Naive thymus-derived CD4-positive, alpha-beta T cell (primary cell): ENCODE measurements at regions of chr5 and their contacts with region 1.

Region 1: GRCh38 chr5:138464008-138464387 is 1.3 kb upstream of the EGR1 start:
- DNase-seq: peak; percentile 90 to 97 (median 94)
- ATAC-seq: peak; percentile 71
- H3K4me3 ChIP-seq: peak overlapping the region; percentile 95
- H3K4me3 Mint-ChIP-seq: peak overlapping the region; percentile 78 to 93 (median 89)
- H3K27ac ChIP-seq: peak overlapping the region; percentile 91
- H3K27ac Mint-ChIP-seq: peak overlapping the region; percentile 76 to 97 (median 91)
- H3K4me1 ChIP-seq: peaks cover 31 to 43% of the 10 kb centered on the region in 2 donors
- H3K4me1 Mint-ChIP-seq: peaks cover 36 to 54% (median 50%) of the 10 kb centered on the region in 7 donors
- H3K27me3 ChIP-seq: no peaks in the 10 kb centered on the region
- H3K27me3 Mint-ChIP-seq: peaks cover 0 to 20% (median 0%) of the 10 kb centered on the region in 5 donors

Region 2: DNA sequence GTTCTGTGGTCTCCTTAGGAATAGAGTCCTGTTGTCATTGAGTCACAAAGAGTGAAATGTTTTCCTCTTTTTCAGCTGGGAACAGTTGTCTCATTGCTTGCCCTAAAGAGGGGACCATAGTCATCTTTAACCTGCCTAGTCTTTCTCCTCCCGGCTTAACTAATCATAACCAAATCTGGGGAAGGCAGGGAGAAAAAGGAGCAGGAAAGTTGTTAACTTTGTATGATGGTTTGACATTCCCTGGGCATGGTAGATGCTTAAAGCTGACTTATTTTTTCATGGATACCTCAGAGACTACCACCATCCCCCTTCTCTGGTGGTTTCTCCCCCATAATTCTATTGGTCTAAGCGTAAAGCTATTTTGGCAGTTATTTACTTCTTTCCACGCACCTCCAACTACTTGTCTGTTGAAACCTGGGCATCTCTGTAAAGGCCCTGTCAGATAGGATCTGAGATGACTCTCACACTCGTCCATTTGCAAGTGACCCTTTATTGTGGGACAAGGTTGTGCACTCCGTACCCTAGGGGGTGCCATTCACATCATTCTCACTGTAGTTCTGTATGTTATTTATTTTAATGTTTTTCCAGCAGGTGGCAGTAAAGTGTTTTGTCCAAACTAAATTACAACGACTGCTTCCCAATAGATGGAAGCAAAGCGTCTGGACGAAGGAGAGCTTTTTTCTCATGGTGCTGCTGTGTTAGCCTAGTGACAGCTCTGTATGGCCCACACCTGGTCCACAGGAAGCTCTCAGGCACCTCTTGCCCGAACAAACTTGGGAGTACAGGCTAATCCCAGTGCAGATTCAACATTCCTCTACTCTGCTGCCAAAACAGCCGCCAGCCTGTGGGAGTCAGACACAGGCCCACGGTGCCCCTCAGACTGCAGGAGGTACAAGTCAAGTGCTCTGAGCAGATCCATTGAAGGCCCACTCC is 428.1 kb before region 1 on chr5:
- CTCF ChIA-PET with region 1: no interaction called
- POLR2A ChIA-PET with region 1: interaction called, 3 read pairs
- intact Hi-C with region 1: loop called in 1 of 2 experiments (anchors 10 kb)
- DNase-seq: peak; percentile 11 to 80 (median 72)
- ATAC-seq: peak; percentile 76
- H3K4me3 ChIP-seq: no peak overlapping the region
- H3K4me3 Mint-ChIP-seq: peak overlapping the region in 9 of 10 donors; percentile 0 to 78 (median 25)
- H3K27ac ChIP-seq: no peak overlapping the region
- H3K27ac Mint-ChIP-seq: peak overlapping the region in 8 of 9 donors; percentile 4 to 89 (median 37)
- H3K4me1 ChIP-seq: peaks cover 4 to 24% of the 10 kb centered on the region in 2 donors
- H3K4me1 Mint-ChIP-seq: peaks cover 15 to 30% (median 24%) of the 10 kb centered on the region in 7 donors
- H3K27me3 ChIP-seq: no peaks in the 10 kb centered on the region
- H3K27me3 Mint-ChIP-seq: no peaks in the 10 kb centered on the region

Region 3: GRCh38 chr5:138337685-138338410 is 126.2 kb before region 1 on chr5 and contains the start of gene FAM53C:
- CTCF ChIA-PET with region 1: no interaction called
- POLR2A ChIA-PET with region 1: interaction called, 4 read pairs
- intact Hi-C with region 1: loop called (anchors 1 kb)
- DNase-seq: peak; percentile 87 to 98 (median 93)
- ATAC-seq: peak; percentile 91
- H3K4me3 ChIP-seq: peak within 1 kb of the TSS; percentile 86
- H3K4me3 Mint-ChIP-seq: peak within 1 kb of the TSS; percentile 77 to 98 (median 94)
- H3K27ac ChIP-seq: peak within 1 kb of the TSS; percentile 95
- H3K27ac Mint-ChIP-seq: peak within 1 kb of the TSS; percentile 96 to 100 (median 99)
- H3K4me1 ChIP-seq: peaks cover 17 to 25% of the 10 kb centered on the region in 2 donors
- H3K4me1 Mint-ChIP-seq: peaks cover 16 to 42% (median 39%) of the 10 kb centered on the region in 7 donors
- H3K27me3 ChIP-seq: no peaks in the 10 kb centered on the region
- H3K27me3 Mint-ChIP-seq: no peaks in the 10 kb centered on the region
- total RNA-seq, gene FAM53C: 25.0 to 71.8 (median 27.7) TPM

Region 4: GRCh38 chr5:138449501-138450239 is 14.3 kb before region 1 on chr5:
- CTCF ChIA-PET with region 1: interaction called, 14 read pairs
- POLR2A ChIA-PET with region 1: interaction called, 8 read pairs
- intact Hi-C with region 1: loop called (anchors 1 kb)
- DNase-seq: peak; percentile 24 to 89 (median 60)
- ATAC-seq: peak; percentile 91
- H3K4me3 ChIP-seq: no peak overlapping the region
- H3K4me3 Mint-ChIP-seq: peak overlapping the region in 4 of 10 donors; percentile 33 to 54 (median 46)
- H3K27ac ChIP-seq: no peak overlapping the region
- H3K27ac Mint-ChIP-seq: no peak overlapping the region
- H3K4me1 ChIP-seq: peaks cover 7% of the 10 kb centered on the region in 2 donors
- H3K4me1 Mint-ChIP-seq: peaks cover 0 to 9% (median 6%) of the 10 kb centered on the region in 7 donors
- H3K27me3 ChIP-seq: no peaks in the 10 kb centered on the region
- H3K27me3 Mint-ChIP-seq: peaks cover 0 to 3% (median 0%) of the 10 kb centered on the region in 5 donors

Region 5: DNA sequence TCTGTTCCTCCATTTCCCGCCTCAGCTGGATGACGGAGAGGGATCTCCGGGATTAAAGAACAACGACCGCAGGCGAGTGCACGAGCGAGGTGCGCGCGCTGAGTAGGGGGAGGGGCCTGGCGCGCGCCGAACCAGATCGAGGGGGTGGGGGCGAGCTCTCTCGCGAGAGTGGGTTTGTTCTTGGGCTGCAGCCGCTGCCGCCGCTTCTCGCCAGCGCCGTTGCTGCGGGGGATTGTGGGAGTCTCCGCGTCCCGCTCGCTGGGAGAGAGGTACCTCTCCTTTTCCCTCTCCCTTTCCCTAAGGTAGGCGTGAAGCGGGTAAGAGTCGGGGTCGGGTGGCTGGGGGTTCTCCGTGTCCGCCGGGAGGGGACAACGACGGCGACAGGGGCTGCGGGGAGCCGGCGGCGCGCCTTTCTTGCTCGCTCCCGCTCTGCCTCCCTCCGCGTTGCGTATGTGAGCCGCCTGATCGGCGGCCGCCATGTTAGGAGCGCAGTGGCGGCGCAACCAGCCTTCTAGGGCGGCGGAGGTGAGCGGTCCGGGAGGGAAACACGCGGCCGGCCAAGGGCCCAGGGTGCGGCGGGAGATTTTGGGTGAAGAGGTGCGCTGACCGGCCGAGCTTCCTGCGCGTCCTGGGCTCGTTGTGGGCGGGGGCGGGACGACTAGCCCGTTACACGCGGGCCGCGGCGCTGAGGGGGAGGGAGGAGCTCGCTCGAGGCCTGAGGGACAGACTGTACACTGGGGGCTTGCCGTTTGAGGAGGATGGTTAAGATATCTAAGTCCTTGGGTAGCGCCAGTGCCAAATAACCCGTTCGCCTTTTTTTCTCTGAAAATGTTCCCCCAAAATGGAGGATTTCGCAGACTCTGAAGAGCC is 829.7 kb after region 1 on chr5 and contains the start of gene MATR3:
- CTCF ChIA-PET with region 1: no interaction called
- POLR2A ChIA-PET with region 1: no interaction called
- intact Hi-C with region 1: loop called in 1 of 2 experiments (anchors 1 kb)
- DNase-seq: peak; percentile 83 to 94 (median 91)
- ATAC-seq: peak; percentile 95
- H3K4me3 ChIP-seq: peak within 1 kb of the TSS; percentile 87
- H3K4me3 Mint-ChIP-seq: peak within 1 kb of the TSS; percentile 91 to 99 (median 98)
- H3K27ac ChIP-seq: peak within 1 kb of the TSS; percentile 98
- H3K27ac Mint-ChIP-seq: peak within 1 kb of the TSS; percentile 96 to 100 (median 99)
- H3K4me1 ChIP-seq: peaks cover 29 to 37% of the 10 kb centered on the region in 2 donors
- H3K4me1 Mint-ChIP-seq: peaks cover 33 to 51% (median 42%) of the 10 kb centered on the region in 7 donors
- H3K27me3 ChIP-seq: no peaks in the 10 kb centered on the region
- H3K27me3 Mint-ChIP-seq: no peaks in the 10 kb centered on the region
- total RNA-seq, gene MATR3: 219 to 333 (median 274) TPM

Region 6: DNA sequence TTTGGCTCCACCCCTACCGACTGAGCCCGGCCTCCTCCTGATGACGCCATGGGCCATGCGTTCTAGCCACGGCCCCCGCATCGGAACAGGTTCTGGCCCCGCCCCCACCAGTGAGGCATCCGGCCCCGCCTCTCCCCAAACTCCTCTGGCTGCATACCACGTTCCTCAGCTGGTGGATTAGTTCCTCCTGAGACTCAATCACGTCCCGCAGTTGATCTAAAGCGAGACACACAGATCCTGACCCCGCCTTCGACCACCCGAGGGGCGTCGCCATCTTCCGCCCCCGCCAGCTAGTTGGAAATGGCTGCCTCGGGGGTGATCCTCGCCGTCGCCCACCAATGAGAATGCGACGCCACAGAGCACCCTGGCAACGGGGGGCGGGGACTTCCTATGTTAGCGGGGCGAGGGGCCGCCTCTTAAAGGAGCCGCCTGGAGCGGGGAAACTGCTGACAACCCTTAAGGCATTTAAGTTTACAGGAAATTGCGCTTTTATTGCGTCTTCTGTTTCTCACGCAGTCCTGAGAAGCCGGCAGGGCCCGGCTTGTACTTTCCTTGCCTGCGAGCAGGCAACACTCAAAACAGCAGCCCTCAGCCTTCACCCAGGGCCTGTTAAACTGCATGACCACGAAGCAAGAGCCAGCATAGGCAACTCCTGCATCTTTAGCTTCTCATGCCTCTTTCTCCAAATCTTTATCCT is 939.9 kb after region 1 on chr5 and contains the start of gene SPATA24:
- CTCF ChIA-PET with region 1: no interaction called
- POLR2A ChIA-PET with region 1: no interaction called
- intact Hi-C with region 1: loop called (anchors 2 to 10 kb)
- DNase-seq: peak; percentile 90 to 99 (median 98)
- ATAC-seq: peak; percentile 94
- H3K4me3 ChIP-seq: peak within 1 kb of the TSS; percentile 56
- H3K4me3 Mint-ChIP-seq: peak within 1 kb of the TSS; percentile 88 to 98 (median 94)
- H3K27ac ChIP-seq: peak within 1 kb of the TSS; percentile 88
- H3K27ac Mint-ChIP-seq: peak within 1 kb of the TSS; percentile 96 to 100 (median 99)
- H3K4me1 ChIP-seq: peaks cover 16 to 18% of the 10 kb centered on the region in 2 donors
- H3K4me1 Mint-ChIP-seq: peaks cover 26 to 42% (median 36%) of the 10 kb centered on the region in 7 donors
- H3K27me3 ChIP-seq: no peaks in the 10 kb centered on the region
- H3K27me3 Mint-ChIP-seq: no peaks in the 10 kb centered on the region
- total RNA-seq, gene SPATA24: 4.4 to 7.6 (median 5.8) TPM